Calu3 (cell line): ENCODE measurements at regions of chr2 and their contacts with region 1.

Region 1: GRCh38 chr2:196068271-196069209 is at the start of gene DNAH7:
- DNase-seq: peak; percentile 90
- H3K4me3 Mint-ChIP-seq: peak within 1 kb of the TSS; percentile 87
- H3K27ac Mint-ChIP-seq: peak within 1 kb of the TSS; percentile 98
- H3K4me1 Mint-ChIP-seq: no peaks in the 10 kb centered on the region
- H3K27me3 Mint-ChIP-seq: no peaks in the 10 kb centered on the region
- CTCF ChIP-seq: peak; percentile 61
- total RNA-seq, gene DNAH7: 1.7 and 2.5 TPM in 2 replicates

Region 2: GRCh38 chr2:195498176-195498575 is 570.4 kb before region 1 on chr2:
- CTCF ChIA-PET with region 1: no interaction called
- intact Hi-C with region 1: loop called (anchors 10 kb)
- DNase-seq: peak; percentile 57
- H3K4me3 Mint-ChIP-seq: no peak overlapping the region
- H3K27ac Mint-ChIP-seq: no peak overlapping the region
- H3K4me1 Mint-ChIP-seq: peaks cover 8% of the 10 kb centered on the region
- H3K27me3 Mint-ChIP-seq: no peaks in the 10 kb centered on the region
- CTCF ChIP-seq: peak; percentile 34

Region 3: DNA sequence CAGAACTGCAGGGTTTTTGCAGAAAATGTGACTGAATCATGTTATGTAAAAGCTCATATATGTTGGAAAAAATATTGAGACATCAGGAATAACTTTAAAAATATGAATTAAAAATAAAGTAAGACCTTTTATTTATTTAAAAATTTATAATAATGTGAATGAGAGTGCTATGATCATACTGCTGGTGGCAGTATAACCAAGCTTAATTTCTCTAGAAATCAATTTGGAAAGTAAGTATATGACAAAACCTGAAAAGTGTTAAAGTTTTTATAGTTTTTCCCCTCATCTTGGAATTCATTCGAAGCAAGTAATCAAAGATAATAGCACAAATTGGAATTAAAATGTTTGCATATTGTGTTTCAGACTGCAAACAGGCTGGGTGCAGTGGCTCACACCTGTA is 404.0 kb before region 1 on chr2:
- CTCF ChIA-PET with region 1: no interaction called
- intact Hi-C with region 1: loop called (anchors 2 kb)
- DNase-seq: no peak
- H3K4me3 Mint-ChIP-seq: no peak overlapping the region
- H3K27ac Mint-ChIP-seq: no peak overlapping the region
- H3K4me1 Mint-ChIP-seq: peaks cover 12% of the 10 kb centered on the region
- H3K27me3 Mint-ChIP-seq: no peaks in the 10 kb centered on the region
- CTCF ChIP-seq: peak; percentile 9

Region 4: DNA sequence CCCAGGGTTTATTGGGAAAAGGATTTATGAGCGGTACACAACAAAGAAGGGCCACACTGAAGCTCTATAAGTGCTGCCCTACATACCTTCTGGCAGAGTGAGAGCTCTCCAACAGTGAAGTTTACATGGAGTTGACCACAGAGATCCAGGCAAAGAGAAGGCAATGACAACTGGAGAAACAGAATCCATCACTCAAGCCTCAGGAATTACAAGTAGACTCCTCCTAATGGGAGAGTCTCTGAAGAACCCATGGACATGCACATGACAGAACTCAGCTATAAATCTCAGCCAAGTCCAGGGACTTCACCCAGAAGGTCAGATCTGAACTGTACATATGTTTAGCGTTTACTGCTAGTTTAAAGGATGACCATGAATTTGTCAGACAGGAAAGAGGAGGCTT is 164.6 kb before region 1 on chr2:
- CTCF ChIA-PET with region 1: no interaction called
- intact Hi-C with region 1: no loop called
- DNase-seq: no peak
- H3K4me3 Mint-ChIP-seq: no peak overlapping the region
- H3K27ac Mint-ChIP-seq: no peak overlapping the region
- H3K4me1 Mint-ChIP-seq: no peaks in the 10 kb centered on the region
- H3K27me3 Mint-ChIP-seq: no peaks in the 10 kb centered on the region
- CTCF ChIP-seq: no peak

Region 5: GRCh38 chr2:195937176-195937575 is 131.4 kb before region 1 on chr2:
- CTCF ChIA-PET with region 1: no interaction called
- intact Hi-C with region 1: loop called (anchors 5 kb)
- DNase-seq: no peak
- H3K4me3 Mint-ChIP-seq: no peak overlapping the region
- H3K27ac Mint-ChIP-seq: no peak overlapping the region
- H3K4me1 Mint-ChIP-seq: no peaks in the 10 kb centered on the region
- H3K27me3 Mint-ChIP-seq: no peaks in the 10 kb centered on the region
- CTCF ChIP-seq: no peak